OCI-LY7 (cell line): ENCODE measurements at regions of chr9 and their contacts with region 1.

Region 1: GRCh38 chr9:121074635-121075385 is at the start of gene CNTRL:
- DNase-seq: peak; percentile 92
- H3K4me3 ChIP-seq: peak within 1 kb of the TSS; percentile 85
- H3K27ac ChIP-seq: peak within 1 kb of the TSS; percentile 99
- H3K4me1 ChIP-seq: peaks cover 58% of the 10 kb centered on the region
- CTCF ChIP-seq: no peak
- total RNA-seq, gene CNTRL: 81.4 and 94.9 TPM in 2 replicates

Region 2: GRCh38 chr9:120402741-120403542 is 671.9 kb before region 1 on chr9:
- CTCF ChIA-PET with region 1: no interaction called
- POLR2A ChIA-PET with region 1: no interaction called
- intact Hi-C with region 1: no loop called
- DNase-seq: no peak
- H3K4me3 ChIP-seq: no peak overlapping the region
- H3K27ac ChIP-seq: no peak overlapping the region
- H3K4me1 ChIP-seq: no peaks in the 10 kb centered on the region
- CTCF ChIP-seq: no peak

Region 3: DNA sequence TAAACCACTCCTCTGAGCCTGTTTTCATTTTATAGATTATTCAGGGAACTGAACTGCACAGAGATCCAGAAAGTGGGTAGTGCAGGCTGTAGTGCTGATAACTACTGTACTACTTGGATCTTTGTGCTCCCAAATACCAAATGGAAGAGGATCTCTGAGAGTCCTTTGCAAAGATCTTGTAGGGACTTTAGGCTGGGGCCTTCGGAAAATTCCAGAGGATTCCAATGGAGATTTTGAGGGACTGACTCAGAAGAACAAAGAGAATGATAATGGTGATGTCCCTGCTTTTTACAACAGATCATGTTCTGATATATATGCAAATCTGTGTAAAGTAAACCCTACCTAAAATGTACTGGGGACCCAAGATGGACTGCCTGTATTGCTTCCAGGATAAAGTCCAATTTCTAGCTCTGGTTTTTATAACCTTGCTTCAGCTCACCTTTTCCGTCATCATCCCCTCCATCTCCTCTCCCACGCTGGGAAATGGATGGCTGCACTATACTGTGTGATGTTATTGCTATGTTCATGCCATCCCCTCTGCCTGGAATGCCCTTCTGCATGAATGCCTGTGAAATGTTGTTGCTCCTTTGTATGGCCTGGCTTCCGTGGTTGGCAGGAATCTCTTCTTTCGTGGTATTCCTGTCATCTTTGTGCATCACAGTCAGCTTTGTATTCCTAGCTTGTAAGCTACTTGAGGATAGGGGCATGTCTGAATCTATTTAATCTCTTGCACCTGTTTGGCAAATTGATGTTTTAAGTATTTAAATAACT is 222.4 kb before region 1 on chr9:
- CTCF ChIA-PET with region 1: no interaction called
- POLR2A ChIA-PET with region 1: interaction called, 10 read pairs
- intact Hi-C with region 1: no loop called
- DNase-seq: no peak
- H3K4me3 ChIP-seq: no peak overlapping the region
- H3K27ac ChIP-seq: no peak overlapping the region
- H3K4me1 ChIP-seq: no peaks in the 10 kb centered on the region
- CTCF ChIP-seq: no peak

Region 4: GRCh38 chr9:120892748-120893610 is 181.8 kb before region 1 on chr9:
- CTCF ChIA-PET with region 1: no interaction called
- POLR2A ChIA-PET with region 1: no interaction called
- intact Hi-C with region 1: loop called (anchors 5 kb)
- DNase-seq: peak; percentile 97
- H3K4me3 ChIP-seq: peak overlapping the region; percentile 7
- H3K27ac ChIP-seq: peak overlapping the region; percentile 98
- H3K4me1 ChIP-seq: peaks cover 95% of the 10 kb centered on the region
- CTCF ChIP-seq: no peak

Region 5: GRCh38 chr9:120985810-120986222 is 89.0 kb before region 1 on chr9:
- CTCF ChIA-PET with region 1: no interaction called
- POLR2A ChIA-PET with region 1: interaction called, 3 read pairs
- intact Hi-C with region 1: loop called (anchors 5 kb)
- DNase-seq: peak; percentile 76
- H3K4me3 ChIP-seq: no peak overlapping the region
- H3K27ac ChIP-seq: no peak overlapping the region
- H3K4me1 ChIP-seq: no peaks in the 10 kb centered on the region
- CTCF ChIP-seq: peak; percentile 89

Region 6: GRCh38 chr9:120999317-120999716 is 75.5 kb before region 1 on chr9:
- CTCF ChIA-PET with region 1: no interaction called
- POLR2A ChIA-PET with region 1: no interaction called
- intact Hi-C with region 1: no loop called
- DNase-seq: no peak
- H3K4me3 ChIP-seq: no peak overlapping the region
- H3K27ac ChIP-seq: no peak overlapping the region
- H3K4me1 ChIP-seq: no peaks in the 10 kb centered on the region
- CTCF ChIP-seq: no peak

Region 7: DNA sequence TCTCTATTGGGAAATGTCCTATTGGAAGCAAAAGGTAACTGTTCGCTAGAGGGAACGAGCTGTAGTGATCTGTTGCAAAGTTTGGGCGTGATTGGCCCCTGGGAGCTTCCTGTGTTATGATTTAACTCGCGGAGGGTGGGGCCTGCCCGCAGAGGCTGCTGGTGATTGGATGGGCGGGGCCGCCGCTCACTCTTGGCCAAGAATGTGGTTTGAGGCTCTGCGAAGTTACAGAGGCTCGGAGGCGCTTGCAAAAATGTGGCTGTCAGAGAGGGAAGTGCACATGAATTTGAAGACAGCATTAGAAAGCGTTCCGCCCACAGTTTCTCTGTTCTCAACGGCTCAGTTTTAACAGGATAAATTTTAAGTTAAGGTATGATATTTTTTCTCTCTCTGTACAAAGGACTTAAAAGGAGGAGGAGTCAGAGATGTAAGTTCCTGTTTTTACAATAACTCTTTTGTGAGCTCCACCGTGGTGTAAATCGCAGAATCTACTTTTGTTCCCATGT is 46.8 kb after region 1 on chr9:
- CTCF ChIA-PET with region 1: no interaction called
- POLR2A ChIA-PET with region 1: interaction called, 10 read pairs
- intact Hi-C with region 1: no loop called
- DNase-seq: peak; percentile 89
- H3K4me3 ChIP-seq: peak overlapping the region; percentile 54
- H3K27ac ChIP-seq: peak overlapping the region; percentile 66
- H3K4me1 ChIP-seq: peaks cover 22% of the 10 kb centered on the region
- CTCF ChIP-seq: peak; percentile 25; the same call in 1 of the 2 replicates

Region 8: DNA sequence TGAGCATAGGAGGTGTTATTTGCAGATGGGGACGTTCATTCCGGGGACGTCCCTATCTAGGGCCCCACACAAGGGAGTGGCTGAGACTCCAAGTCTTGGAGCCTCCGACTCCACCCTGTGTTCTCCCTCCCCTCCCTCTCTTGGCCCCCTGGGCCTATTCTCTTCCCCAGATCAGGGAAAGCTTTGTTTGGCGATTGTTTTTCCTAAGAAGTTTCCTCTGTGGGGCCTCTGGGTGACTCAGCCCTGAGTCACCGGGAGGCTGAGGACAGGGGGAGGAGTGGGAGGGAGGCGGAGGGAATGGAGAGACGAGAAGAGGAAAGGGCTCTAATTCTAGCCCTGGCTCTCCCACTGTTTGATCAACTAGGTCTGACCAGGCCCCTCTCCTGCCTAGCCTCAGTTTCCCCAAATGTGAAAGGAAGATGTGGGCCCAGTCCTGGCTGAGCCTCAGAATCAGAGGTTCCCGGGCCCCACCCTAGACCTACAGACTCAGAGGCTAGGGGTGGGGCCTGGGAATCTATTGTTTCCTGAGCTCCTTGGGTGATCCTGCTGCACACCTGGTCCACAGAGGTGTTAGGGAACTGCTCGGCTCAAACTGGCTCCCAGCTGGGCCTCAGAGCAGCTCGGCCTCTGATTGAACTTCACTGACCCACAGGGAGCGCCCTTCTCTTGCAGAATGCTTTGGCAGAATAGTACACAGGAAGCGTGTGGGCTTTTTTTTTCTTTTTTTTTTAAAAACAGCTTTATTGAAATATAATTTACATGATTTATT is 212.3 kb after region 1 on chr9:
- CTCF ChIA-PET with region 1: no interaction called
- POLR2A ChIA-PET with region 1: no interaction called
- intact Hi-C with region 1: no loop called
- DNase-seq: no peak
- H3K4me3 ChIP-seq: no peak overlapping the region
- H3K27ac ChIP-seq: no peak overlapping the region
- H3K4me1 ChIP-seq: no peaks in the 10 kb centered on the region
- CTCF ChIP-seq: no peak

Region 9: GRCh38 chr9:121944716-121945191 is 869.9 kb after region 1 on chr9:
- CTCF ChIA-PET with region 1: no interaction called
- POLR2A ChIA-PET with region 1: interaction called, 3 read pairs
- intact Hi-C with region 1: loop called (anchors 10 kb)
- DNase-seq: peak; percentile 81
- H3K4me3 ChIP-seq: peak overlapping the region; percentile 48
- H3K27ac ChIP-seq: peak overlapping the region; percentile 99
- H3K4me1 ChIP-seq: peaks cover 98% of the 10 kb centered on the region
- CTCF ChIP-seq: no peak

Region 10: DNA sequence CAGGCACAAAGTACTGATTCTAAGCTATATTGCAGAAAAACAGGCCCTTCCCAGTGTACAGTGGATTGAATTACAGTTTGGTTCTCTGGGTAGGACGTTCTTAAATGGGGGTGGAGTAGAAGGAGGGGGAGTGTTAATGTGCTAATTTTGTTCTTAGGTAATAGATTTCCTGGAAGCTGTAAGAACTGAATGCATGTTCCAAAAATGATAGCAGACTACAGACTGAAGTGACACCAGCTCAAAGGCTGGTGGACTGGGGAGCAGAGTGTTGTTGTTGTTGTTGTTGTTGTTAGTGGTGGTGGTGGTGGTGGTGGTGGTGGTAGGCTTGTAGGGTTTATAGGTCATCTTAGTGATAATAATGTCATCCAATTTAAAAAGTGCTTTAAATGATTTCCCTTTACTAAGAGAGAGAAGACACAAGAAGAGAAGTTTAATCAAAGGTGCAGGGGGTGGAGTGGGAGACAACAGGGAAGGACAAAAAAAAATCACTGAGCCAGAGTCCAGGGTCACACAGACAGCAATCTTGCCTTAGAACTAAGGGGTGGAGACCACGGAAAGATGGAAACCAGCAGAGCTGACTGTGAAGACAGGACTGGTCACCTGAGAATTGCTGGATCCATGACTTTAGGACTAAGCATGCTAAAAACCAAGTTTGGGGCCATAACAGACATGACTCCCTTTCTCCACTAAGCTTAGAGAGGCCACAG is 991.3 kb after region 1 on chr9:
- CTCF ChIA-PET with region 1: no interaction called
- POLR2A ChIA-PET with region 1: no interaction called
- intact Hi-C with region 1: no loop called
- DNase-seq: no peak
- H3K4me3 ChIP-seq: no peak overlapping the region
- H3K27ac ChIP-seq: no peak overlapping the region
- H3K4me1 ChIP-seq: no peaks in the 10 kb centered on the region
- CTCF ChIP-seq: no peak